AG04449 (cell line): ENCODE measurements at regions of chr6 and their contacts with region 1.

Region 1: DNA sequence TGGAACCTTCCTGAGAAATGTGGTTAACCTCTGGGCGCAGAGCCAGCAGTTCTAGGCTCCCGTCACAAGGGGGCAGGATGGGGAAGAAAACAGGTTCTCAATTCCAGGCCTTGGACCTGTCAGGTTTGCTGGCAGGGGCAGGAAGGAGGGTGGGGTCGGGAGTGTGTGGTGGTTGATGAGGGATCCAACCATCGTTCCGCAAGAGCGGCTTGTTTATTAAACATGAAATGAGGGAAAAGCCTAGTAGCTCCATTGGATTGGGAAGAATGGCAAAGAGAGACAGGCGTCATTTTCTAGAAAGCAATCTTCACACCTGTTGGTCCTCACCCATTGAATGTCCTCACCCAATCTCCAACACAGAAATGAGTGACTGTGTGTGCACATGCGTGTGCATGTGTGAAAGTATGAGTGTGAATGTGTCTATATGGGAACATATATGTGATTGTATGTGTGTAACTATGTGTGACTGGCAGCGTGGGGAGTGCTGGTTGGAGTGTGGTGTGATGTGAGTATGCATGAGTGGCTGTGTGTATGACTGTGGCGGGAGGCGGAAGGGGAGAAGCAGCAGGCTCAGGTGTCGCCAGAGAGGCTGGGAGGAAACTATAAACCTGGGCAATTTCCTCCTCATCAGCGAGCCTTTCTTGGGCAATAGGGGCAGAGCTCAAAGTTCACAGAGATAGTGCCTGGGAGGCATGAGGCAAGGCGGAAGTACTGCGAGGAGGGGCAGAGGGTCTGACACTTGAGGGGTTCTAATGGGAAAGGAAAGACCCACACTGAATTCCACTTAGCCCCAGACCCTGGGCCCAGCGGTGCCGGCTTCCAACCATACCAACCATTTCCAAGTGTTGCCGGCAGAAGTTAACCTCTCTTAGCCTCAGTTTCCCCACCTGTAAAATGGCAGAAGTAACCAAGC is 29.6 kb downstream of the SRSF3 start:
- DNase-seq: no peak
- H3K4me3 ChIP-seq: no peak overlapping the region
- CTCF ChIP-seq: peak; percentile 87

Region 2: DNA sequence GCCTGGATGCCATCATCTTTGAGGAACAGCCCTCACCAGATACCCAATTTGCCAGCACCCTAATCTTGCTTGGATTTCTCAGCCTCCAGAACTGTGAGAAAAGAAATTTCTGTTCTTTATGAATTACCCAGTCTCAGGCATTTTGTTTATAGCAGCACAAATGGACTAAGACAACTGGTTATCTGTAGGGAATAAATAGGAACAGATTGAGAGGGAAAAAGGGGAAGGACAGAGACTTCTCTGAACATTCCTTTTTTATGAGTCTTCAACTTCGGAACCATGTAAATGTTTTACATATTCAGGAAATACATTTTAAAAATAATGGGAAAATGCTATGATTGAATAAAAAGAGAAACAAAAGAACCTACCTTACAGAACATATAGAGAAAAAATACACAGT is 160.1 kb before region 1 on chr6:
- CTCF ChIA-PET with region 1: no interaction called
- POLR2A ChIA-PET with region 1: no interaction called
- DNase-seq: no peak
- H3K4me3 ChIP-seq: no peak overlapping the region
- CTCF ChIP-seq: no peak

Region 3: GRCh38 chr6:36576561-36576960 is 47.2 kb before region 1 on chr6:
- CTCF ChIA-PET with region 1: no interaction called
- POLR2A ChIA-PET with region 1: no interaction called
- DNase-seq: no peak
- H3K4me3 ChIP-seq: no peak overlapping the region
- CTCF ChIP-seq: no peak

Region 4: DNA sequence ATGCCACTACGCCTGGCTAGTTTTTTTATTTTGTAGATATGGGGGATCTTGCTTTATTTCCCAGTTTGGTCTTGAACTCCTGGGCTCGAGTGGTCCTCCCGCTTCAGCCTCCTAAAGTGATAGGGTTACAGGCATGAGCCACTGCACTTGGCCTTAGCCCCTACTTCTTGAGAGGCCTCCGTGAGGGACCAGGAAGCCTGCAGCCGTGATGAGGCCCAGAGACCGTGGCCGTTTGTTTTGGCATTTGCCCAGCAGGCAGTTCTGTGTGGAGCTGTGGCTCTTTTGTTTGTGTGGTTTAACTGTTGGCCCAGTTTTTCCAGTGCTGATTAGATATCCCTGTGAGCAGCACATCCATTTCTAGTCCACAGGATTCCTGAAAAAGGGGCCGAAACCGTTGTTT is 10.1 kb after region 1 on chr6:
- CTCF ChIA-PET with region 1: interaction called, 14 read pairs
- POLR2A ChIA-PET with region 1: no interaction called
- DNase-seq: no peak
- H3K4me3 ChIP-seq: no peak overlapping the region
- CTCF ChIP-seq: no peak

Region 5: DNA sequence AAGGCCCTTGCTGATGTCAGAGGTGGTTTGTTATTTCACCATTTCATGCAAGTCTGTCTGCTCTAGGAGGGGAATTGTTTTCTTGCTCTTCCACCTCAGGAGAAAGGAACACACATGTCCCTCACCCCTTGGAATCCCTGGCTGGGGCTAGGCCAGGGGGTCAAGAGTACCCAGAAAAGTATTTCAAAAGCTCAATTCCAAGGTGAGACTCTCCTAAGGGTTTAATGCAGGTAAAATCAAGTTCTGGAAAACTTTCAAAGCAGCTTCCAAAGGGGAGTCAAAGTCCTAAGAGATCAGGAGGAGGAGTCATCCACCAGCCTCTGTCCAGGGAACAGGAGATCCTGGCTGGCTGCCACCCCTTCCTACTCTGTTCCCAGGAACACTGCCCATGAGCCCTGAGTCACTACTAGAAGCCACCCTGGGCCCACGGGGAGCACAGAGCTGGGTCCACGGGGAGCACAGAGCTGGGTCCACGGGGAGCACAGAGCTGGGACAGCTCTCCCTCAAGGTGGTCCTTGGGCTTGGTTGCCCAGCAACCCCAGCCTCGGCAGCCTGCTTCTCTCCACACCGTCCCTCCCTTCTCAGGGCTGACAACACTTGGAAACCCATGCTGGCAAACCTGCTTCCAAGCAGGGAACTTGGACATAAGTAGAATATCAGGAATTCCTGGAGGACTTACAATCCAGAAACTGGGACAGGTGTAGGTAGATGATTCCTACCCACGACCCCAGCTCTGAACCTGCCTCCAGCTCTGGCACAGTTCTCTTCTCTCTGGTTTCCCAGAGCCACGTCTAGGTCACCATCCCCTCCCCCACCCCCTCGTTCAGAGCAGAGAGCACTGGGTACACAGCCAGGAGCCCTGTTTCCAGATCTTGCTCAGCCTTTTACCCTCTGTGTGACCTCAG is 19.4 kb after region 1 on chr6:
- CTCF ChIA-PET with region 1: interaction called, 33 read pairs
- POLR2A ChIA-PET with region 1: no interaction called
- DNase-seq: no peak
- H3K4me3 ChIP-seq: no peak overlapping the region
- CTCF ChIP-seq: no peak

Region 6: GRCh38 chr6:36678518-36679027 is 54.8 kb after region 1 on chr6 and contains the start of gene CDKN1A:
- CTCF ChIA-PET with region 1: interaction called, 118 read pairs
- POLR2A ChIA-PET with region 1: interaction called, 19 read pairs
- DNase-seq: no peak
- H3K4me3 ChIP-seq: peak within 1 kb of the TSS; percentile 91
- CTCF ChIP-seq: no peak

Region 7: GRCh38 chr6:36724514-36725390 is 100.9 kb after region 1 on chr6:
- CTCF ChIA-PET with region 1: interaction called, 179 read pairs
- POLR2A ChIA-PET with region 1: no interaction called
- DNase-seq: no peak
- H3K4me3 ChIP-seq: no peak overlapping the region
- CTCF ChIP-seq: peak; percentile 52

Region 8: GRCh38 chr6:36735110-36736071 is 111.6 kb after region 1 on chr6:
- CTCF ChIA-PET with region 1: interaction called, 179 read pairs
- POLR2A ChIA-PET with region 1: no interaction called
- DNase-seq: peak; percentile 91
- H3K4me3 ChIP-seq: peak overlapping the region; percentile 42
- CTCF ChIP-seq: peak; percentile 23

Region 9: GRCh38 chr6:36752886-36753506 is 129.2 kb after region 1 on chr6:
- CTCF ChIA-PET with region 1: interaction called, 167 read pairs
- POLR2A ChIA-PET with region 1: no interaction called
- DNase-seq: no peak
- H3K4me3 ChIP-seq: no peak overlapping the region
- CTCF ChIP-seq: no peak